CD8-positive, alpha-beta T cell (primary cell): ENCODE measurements at regions of chr2 and their contacts with region 1.

Region 1: DNA sequence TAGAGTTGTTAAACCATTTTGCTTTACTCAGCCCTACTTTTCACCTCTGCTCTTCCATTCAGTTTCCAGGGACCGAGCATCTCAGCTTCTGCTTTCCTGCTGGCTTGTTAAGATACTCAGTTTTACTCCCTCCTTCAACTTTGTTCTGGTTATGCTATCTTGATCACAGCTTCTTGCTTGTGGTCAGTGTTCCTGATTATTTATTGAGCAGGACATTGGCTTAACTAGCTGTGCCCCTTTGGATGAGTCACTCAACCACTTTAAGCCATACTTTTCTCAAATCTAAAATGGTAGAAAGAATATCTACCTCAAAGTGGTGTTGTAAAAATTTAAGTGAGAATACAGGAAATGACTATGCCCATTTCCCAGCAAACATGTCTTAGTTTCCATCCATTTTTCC is 124.0 kb downstream of the KYNU start:
- DNase-seq: no peak
- ATAC-seq: no peak
- H3K4me3 ChIP-seq: no peak overlapping the region
- H3K4me3 Mint-ChIP-seq: no peak overlapping the region
- H3K27ac ChIP-seq: no peak overlapping the region
- H3K27ac Mint-ChIP-seq: no peak overlapping the region
- H3K4me1 ChIP-seq: no peaks in the 10 kb centered on the region
- H3K4me1 Mint-ChIP-seq: no peaks in the 10 kb centered on the region
- H3K27me3 ChIP-seq: no peaks in the 10 kb centered on the region
- H3K27me3 Mint-ChIP-seq: peaks cover 24% of the 10 kb centered on the region
- CTCF ChIP-seq: no peak

Region 2: GRCh38 chr2:144152817-144153271 is 1151.3 kb after region 1 on chr2:
- CTCF ChIA-PET with region 1: no interaction called
- POLR2A ChIA-PET with region 1: no interaction called
- intact Hi-C with region 1: loop called in 1 of 2 experiments (anchors 5 kb)
- DNase-seq: no peak
- ATAC-seq: no peak
- H3K4me3 ChIP-seq: no peak overlapping the region
- H3K4me3 Mint-ChIP-seq: no peak overlapping the region
- H3K27ac ChIP-seq: no peak overlapping the region
- H3K27ac Mint-ChIP-seq: no peak overlapping the region
- H3K4me1 ChIP-seq: no peaks in the 10 kb centered on the region
- H3K4me1 Mint-ChIP-seq: no peaks in the 10 kb centered on the region
- H3K27me3 ChIP-seq: no peaks in the 10 kb centered on the region
- H3K27me3 Mint-ChIP-seq: no peaks in the 10 kb centered on the region
- CTCF ChIP-seq: no peak